ENCODE measurements at regions of chr15 and their contacts with region 1.

Region 1: DNA sequence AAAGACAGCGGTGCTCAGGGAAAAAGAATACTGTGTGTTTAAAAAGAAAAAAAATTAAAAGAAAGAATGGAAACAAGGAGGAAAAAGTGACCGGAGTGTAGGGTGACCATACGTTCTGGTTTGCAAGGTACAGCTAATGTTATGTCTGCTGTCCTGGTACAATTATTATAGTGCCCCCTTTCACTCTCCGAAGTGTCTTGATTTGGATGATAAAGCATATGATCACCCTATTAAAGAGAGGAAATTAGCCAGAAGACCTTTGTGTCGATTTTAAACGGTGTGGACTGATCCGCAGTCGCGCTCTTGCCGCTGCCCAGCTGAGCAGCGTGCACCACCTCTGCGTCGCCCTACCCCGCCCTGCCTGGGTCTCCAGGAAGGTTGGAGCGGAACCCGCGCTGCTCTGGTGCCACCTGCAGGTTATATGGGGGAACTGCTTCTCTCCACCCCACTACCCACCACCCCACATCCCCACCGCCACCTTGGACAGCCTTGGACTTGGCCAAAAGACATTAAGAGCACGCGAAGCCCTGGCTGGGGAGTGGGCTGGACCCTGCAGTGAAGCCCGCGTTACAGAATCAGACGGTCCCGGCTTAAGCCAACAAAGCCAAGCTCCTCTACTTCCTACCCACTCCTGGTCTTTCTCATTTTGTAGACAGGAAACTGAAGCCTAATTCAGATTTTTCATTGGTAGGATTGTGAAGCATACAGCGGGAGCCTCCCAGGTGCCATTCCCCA is 41.2 kb upstream of the UBE2Q2 start:
- DNase-seq: peak; percentile 70 to 76 (median 71)
- H3K4me3 ChIP-seq: peak overlapping the region in 1 of 3 experiments; percentile 59
- H3K4me3 Mint-ChIP-seq: peak overlapping the region; percentile 64 to 88
- H3K27ac ChIP-seq: no peak overlapping the region
- H3K27ac Mint-ChIP-seq: peak overlapping the region in 1 of 7 donors; percentile 74
- H3K4me1 ChIP-seq: peaks cover 6 to 10% of the 10 kb centered on the region in 2 donors
- H3K4me1 Mint-ChIP-seq: peaks cover 9% of the 10 kb centered on the region
- H3K27me3 ChIP-seq: peaks cover 13 to 16% of the 10 kb centered on the region in 2 donors
- H3K27me3 Mint-ChIP-seq: peaks cover 18 to 39% (median 19%) of the 10 kb centered on the region in 3 donors
- CTCF ChIP-seq: peak; percentile 95

Region 2: DNA sequence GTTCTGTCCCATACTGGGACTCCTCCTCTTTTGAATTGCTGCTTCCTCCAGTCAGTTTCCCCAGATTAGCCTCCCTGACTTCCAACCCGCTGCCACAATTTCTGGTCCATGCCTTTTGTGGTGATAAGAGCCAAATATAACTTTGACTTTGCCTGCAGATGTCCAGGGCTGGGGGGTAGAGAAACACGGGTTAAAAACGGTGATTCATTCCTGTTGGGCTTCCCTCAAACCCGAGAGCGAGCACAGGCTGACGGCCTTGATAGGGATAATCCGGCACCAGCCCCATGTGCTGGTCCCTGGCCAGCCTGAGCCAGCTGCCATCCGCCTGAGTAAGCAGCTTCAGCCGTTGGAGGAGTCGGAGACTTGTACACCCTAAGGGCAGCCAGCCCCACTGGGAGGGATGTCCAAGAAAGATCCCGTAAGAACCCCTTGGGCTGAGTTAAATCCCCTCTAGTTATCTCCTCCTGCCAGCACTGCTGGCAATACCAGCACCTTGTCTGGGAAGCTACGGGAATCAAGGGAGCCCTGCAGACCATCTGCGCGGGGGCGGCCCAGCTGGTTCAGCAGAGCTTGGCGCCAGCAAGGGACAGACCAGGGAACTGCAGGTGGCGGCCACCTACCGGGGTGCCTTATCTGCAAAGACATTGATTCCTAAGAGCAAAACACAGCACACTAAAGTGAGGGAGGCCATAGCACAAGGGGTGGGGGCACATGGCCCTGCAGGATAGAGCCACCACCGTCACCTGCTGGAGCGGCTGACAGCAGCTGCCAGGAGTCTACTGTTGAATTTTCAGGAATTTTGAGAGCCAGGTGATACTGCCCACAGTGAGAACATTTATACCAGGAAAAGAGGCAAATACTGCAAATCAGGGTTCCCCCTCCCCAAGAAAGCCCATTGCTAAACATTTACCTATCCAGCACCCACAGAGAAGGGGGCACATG is 107.5 kb before region 1 on chr15:
- intact Hi-C with region 1: loop called in 1 of 2 experiments (anchors 5 kb)
- DNase-seq: peak in 2 of 3 donors; percentile 14 to 32
- H3K4me3 ChIP-seq: no peak overlapping the region
- H3K4me3 Mint-ChIP-seq: peak overlapping the region in 1 of 2 donors; percentile 76
- H3K27ac ChIP-seq: no peak overlapping the region
- H3K27ac Mint-ChIP-seq: peak overlapping the region in 1 of 7 donors; percentile 35
- H3K4me1 ChIP-seq: peaks cover 30 to 35% of the 10 kb centered on the region in 2 donors
- H3K4me1 Mint-ChIP-seq: peaks cover 41% of the 10 kb centered on the region
- H3K27me3 ChIP-seq: peaks cover 4 to 36% of the 10 kb centered on the region in 2 donors
- H3K27me3 Mint-ChIP-seq: peaks cover 47 to 55% (median 49%) of the 10 kb centered on the region in 3 donors
- CTCF ChIP-seq: peak; percentile 21

Region 3: DNA sequence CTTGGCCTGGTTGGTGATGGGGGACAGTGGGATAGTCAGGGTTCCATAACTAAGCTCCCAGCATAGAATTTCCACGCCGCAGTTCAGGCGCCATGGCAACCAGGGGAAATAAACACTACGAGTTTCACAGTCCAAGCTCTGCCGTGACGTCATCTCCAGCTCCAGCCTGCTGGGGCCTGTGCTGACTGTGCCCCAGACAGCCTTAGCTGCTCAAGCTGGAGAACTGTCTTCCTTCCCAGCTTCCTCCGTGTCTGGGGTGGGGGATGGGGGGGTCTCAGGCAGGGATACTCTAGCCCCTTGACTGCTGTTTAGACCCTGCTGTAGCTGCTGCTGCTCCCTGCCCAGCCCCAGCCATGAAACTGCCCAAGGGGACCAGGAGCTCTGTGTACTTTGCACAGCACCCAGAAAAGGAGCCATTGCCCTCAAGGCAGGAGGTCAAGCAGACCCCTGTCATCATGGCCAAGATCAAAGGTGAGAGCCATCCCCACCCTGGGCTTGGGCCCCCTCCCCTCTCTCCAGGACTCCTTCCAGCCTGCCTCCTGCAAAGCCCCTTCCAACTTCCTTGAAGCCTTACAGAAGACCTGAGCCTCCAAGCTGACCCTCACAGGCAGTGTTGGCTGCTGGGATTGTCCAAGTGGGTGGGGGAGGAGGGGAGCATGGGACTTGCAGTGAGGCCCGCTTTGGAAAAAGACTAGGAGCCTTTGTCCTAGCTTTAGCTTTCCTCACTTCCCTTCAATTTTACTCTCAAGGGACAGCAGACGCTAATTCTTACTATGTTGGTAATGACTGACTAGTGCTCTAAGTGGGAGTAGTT is 78.0 kb before region 1 on chr15:
- intact Hi-C with region 1: loop called (anchors 5 kb)
- DNase-seq: peak; percentile 83 to 93 (median 91)
- H3K4me3 ChIP-seq: no peak overlapping the region
- H3K4me3 Mint-ChIP-seq: no peak overlapping the region
- H3K27ac ChIP-seq: peak overlapping the region in 1 of 2 donors; percentile 27
- H3K27ac Mint-ChIP-seq: peak overlapping the region; percentile 69 to 90 (median 87)
- H3K4me1 ChIP-seq: no peaks in the 10 kb centered on the region
- H3K4me1 Mint-ChIP-seq: peaks cover 17% of the 10 kb centered on the region
- H3K27me3 ChIP-seq: no peaks in the 10 kb centered on the region
- H3K27me3 Mint-ChIP-seq: peaks cover 9 to 31% (median 18%) of the 10 kb centered on the region in 3 donors
- CTCF ChIP-seq: no peak

Region 4: GRCh38 chr15:75736256-75736860 is 65.7 kb before region 1 on chr15:
- intact Hi-C with region 1: no loop called
- DNase-seq: no peak
- H3K4me3 ChIP-seq: no peak overlapping the region
- H3K4me3 Mint-ChIP-seq: peak overlapping the region in 1 of 2 donors; percentile 51
- H3K27ac ChIP-seq: no peak overlapping the region
- H3K27ac Mint-ChIP-seq: no peak overlapping the region
- H3K4me1 ChIP-seq: peaks cover 53 to 60% of the 10 kb centered on the region in 2 donors
- H3K4me1 Mint-ChIP-seq: peaks cover 56% of the 10 kb centered on the region
- H3K27me3 ChIP-seq: peaks cover 0 to 5% of the 10 kb centered on the region in 2 donors
- H3K27me3 Mint-ChIP-seq: peaks cover 13 to 17% (median 16%) of the 10 kb centered on the region in 3 donors
- CTCF ChIP-seq: no peak

Region 5: DNA sequence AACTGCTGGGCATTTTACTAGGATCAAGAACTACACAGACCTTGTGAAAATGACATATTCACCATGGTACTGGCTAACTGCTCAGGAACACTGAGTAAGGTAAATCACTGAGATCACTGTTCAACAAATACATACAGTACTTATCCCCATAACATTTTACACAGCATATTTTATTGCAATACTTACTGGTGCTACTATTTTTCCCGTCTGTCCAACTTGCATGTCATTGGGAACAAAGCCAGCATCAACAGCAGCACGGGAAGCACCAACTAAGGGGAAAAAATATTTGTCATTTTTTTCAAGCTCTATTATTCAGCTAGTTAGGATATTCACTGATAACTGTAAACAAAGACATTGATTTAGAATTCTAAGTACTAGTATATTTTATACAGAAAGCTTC is 472.2 kb after region 1 on chr15:
- intact Hi-C with region 1: no loop called
- DNase-seq: no peak
- H3K4me3 ChIP-seq: no peak overlapping the region
- H3K4me3 Mint-ChIP-seq: no peak overlapping the region
- H3K27ac ChIP-seq: no peak overlapping the region
- H3K27ac Mint-ChIP-seq: no peak overlapping the region
- H3K4me1 ChIP-seq: no peaks in the 10 kb centered on the region
- H3K4me1 Mint-ChIP-seq: peaks cover 2% of the 10 kb centered on the region
- H3K27me3 ChIP-seq: no peaks in the 10 kb centered on the region
- H3K27me3 Mint-ChIP-seq: peaks cover 0 to 2% (median 0%) of the 10 kb centered on the region in 3 donors
- CTCF ChIP-seq: no peak

Measured in CD14-positive monocyte (primary cell).